Left lung (tissue), 14 donors: ENCODE measurements at regions of chr9 and their contacts with region 1.

Region 1: DNA sequence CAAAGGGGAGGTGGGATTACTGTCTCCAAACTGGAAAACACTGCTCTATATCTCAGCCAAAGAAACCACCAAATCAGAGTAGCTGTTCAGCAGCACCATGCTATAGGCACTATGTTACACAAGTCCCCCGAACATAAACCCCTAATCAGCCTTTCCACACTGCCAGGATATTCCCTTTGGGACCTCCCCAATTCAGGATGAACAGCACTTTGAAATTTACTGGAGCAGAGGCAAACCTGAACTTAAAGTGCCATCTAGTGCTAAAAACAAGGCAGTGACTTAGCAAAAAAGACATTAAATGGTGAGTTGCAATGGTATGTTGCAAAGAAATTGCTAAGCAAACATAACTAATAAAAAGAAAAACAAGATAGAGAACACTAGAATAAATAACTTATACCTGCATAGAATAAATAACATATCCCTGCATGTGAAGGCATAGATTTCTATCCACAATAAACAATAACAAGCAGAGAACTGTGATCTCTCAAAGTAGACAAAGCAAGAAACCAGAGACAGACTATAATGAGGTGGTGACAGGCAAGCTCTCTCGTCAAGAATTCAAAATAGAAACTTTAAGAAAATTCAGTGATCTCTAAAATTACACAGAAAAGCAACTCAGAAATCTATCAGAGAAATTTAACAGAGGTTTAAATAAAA is 584.4 kb upstream of the ACO1 start:
- DNase-seq: peak in 1 of 4 donors; percentile 7
- ATAC-seq: peak; percentile 76
- H3K4me3 ChIP-seq: no peak overlapping the region
- H3K27ac ChIP-seq: no peak overlapping the region
- H3K4me1 ChIP-seq: no peaks in the 10 kb centered on the region
- H3K27me3 ChIP-seq: no peaks in the 10 kb centered on the region
- CTCF ChIP-seq: peak; percentile 32 to 43

Region 2: GRCh38 chr9:31119882-31120454 is 680.1 kb before region 1 on chr9:
- intact Hi-C with region 1: loop called in 1 of 2 experiments (anchors 10 kb)
- DNase-seq: peak in 1 of 4 donors; percentile 24
- ATAC-seq: peak; percentile 80
- H3K4me3 ChIP-seq: no peak overlapping the region
- H3K27ac ChIP-seq: no peak overlapping the region
- H3K4me1 ChIP-seq: no peaks in the 10 kb centered on the region
- H3K27me3 ChIP-seq: no peaks in the 10 kb centered on the region
- CTCF ChIP-seq: peak; percentile 51 to 54

Region 3: DNA sequence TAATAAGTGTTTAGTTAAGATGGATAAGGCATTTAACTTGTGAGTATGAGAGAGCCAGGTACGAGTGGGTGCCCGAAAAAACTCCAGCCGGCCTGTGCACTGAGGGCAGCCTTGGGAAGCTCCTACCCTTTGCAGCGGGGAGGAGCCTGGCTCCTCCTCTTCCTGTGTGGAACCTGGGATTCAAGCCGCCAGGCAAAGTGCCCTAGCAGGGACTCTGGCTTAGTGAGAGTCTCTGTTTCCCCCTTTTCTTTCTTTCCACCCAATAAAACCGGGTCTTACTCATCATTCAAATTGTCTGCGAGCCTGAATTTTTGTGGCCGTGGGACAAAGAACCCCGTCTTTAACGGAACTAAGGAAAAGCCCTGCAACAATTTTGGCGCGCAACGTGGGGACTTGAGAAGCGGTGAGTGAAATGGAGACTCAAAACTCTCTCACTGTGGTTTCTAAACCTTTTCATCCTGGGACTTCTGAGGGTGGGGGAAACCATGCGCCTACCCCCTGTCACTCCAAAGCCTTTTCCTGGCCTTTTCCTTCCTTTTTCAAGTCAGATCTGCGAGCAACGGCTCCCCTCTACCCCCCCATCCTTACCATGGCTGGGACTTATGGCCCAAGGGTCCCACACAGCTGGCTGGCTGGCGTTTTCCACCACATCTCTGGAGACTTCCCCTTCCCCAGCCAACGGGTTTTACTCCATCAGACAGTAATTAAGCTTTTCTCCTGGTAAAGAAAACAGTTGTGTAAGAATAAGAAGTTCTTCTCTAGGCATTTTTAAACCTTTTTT is 48.6 kb after region 1 on chr9:
- intact Hi-C with region 1: no loop called
- DNase-seq: no peak
- ATAC-seq: no peak
- H3K4me3 ChIP-seq: no peak overlapping the region
- H3K27ac ChIP-seq: no peak overlapping the region
- H3K4me1 ChIP-seq: no peaks in the 10 kb centered on the region
- H3K27me3 ChIP-seq: no peaks in the 10 kb centered on the region
- CTCF ChIP-seq: no peak

Region 4: GRCh38 chr9:32004431-32005076 is 204.5 kb after region 1 on chr9:
- intact Hi-C with region 1: no loop called
- DNase-seq: no peak
- ATAC-seq: no peak
- H3K4me3 ChIP-seq: no peak overlapping the region
- H3K27ac ChIP-seq: no peak overlapping the region
- H3K4me1 ChIP-seq: no peaks in the 10 kb centered on the region
- H3K27me3 ChIP-seq: no peaks in the 10 kb centered on the region
- CTCF ChIP-seq: no peak